ENCODE measurements at regions of chr7 and their contacts with region 1.

Region 1: DNA sequence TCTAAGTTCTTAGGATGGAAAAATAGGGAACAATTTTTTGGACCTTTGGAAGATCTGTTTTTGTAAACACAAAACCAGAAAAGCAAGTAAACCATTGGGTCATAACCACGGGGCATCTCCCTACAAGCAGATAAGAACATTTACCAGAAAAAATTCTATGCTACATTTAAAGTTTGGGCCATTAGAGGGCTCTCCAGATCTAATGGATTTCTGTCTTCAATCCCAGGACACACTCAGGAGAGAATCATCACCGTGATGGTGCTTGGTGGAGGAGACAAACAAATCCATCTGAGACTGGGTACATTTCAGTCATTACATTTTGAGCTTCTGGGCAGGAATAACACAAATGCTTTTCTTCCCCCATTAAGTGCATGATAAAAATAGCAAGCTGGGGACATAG is 178.4 kb upstream of the TARP start:
- DNase-seq: no peak
- H3K4me3 ChIP-seq: no peak overlapping the region
- H3K27ac ChIP-seq: no peak overlapping the region
- H3K27me3 ChIP-seq: no peaks in the 10 kb centered on the region
- CTCF ChIP-seq: peak; percentile 48

Region 2: DNA sequence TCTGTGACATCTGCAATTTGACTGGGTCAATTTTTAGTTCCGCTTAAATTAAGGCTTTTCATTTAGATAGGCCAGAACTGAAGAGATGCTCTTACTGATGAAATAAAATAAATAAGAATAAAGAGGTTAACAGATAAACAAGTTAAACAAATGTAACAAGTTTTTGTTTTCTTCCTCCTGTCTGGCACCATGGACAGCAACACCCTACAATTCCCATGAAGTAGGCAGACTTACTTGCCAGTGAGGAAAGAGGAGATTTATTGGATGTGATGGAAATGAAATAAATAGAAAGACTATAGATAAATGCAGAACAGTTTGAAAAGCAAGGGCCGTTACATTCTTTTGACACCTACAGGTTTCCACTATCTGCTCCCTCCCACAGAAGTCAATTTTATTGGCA is 60.9 kb after region 1 on chr7:
- CTCF ChIA-PET with region 1: no interaction called
- POLR2A ChIA-PET with region 1: no interaction called
- DNase-seq: no peak
- H3K4me3 ChIP-seq: no peak overlapping the region
- H3K27ac ChIP-seq: no peak overlapping the region
- H3K27me3 ChIP-seq: no peaks in the 10 kb centered on the region
- CTCF ChIP-seq: no peak

Region 3: DNA sequence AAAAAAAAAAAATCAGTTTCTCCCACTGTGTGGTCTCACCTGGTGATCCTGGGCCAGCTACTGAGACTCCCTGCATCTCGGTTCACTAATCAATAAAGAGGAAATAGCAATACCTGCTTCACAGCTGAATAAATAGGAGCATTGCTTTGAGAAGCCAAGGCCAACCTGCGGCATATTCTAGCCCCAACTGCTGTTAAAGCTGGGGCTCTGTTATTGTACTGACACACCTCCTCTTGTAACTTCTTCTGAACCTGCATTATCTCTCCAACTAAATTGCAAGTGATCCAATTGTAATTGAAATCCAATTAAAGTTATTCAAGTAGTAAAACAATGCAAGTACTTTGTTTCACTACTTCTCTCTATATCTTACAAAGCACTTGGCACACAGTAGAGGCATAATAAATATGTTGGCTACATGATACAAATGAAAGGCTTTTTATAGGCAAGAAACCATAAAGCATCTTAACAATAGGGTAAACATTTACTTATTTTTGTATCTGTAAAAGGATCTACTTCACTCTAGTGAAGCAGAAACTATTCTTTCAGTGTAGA is 141.0 kb after region 1 on chr7:
- CTCF ChIA-PET with region 1: no interaction called
- POLR2A ChIA-PET with region 1: no interaction called
- DNase-seq: no peak
- H3K4me3 ChIP-seq: no peak overlapping the region
- H3K27ac ChIP-seq: no peak overlapping the region
- H3K27me3 ChIP-seq: no peaks in the 10 kb centered on the region
- CTCF ChIP-seq: no peak

Region 4: DNA sequence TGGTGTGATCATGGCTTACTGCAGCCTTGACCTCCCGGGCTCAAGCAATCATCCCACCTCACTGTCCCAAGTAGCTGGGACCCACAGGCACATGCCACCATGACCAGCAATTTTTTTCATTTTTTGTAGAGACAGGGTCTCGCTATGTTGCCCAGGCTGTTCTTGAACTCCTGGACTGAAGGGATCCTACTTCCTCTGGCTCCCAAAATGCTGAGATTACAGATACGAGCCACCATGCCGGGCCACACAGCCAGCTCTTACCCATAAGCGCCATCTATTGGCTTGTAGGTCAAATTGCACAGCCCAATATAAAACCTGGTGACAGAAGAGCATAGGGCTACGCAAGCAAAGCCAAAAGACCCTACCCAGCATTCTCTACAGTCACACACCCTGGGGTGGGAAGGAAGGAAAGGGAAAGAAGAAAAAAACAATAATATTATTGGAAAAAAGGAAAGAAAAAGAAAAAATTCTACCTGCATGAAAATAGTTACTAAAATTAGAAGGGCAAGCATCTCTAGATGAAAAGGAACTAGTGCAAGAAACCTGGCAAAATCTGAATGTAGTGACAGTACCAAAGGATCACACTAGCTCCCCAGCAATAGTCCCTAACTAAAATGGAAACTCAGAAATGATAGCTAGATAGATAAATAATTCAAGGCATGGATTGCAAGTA is 208.7 kb after region 1 on chr7:
- CTCF ChIA-PET with region 1: interaction called, 28 read pairs
- POLR2A ChIA-PET with region 1: no interaction called
- DNase-seq: no peak
- H3K4me3 ChIP-seq: no peak overlapping the region
- H3K27ac ChIP-seq: no peak overlapping the region
- H3K27me3 ChIP-seq: no peaks in the 10 kb centered on the region
- CTCF ChIP-seq: peak; percentile 88

Measured in AG04450 (cell line).